ENCODE measurements at regions of chr11 and their contacts with region 1.

Region 1: DNA sequence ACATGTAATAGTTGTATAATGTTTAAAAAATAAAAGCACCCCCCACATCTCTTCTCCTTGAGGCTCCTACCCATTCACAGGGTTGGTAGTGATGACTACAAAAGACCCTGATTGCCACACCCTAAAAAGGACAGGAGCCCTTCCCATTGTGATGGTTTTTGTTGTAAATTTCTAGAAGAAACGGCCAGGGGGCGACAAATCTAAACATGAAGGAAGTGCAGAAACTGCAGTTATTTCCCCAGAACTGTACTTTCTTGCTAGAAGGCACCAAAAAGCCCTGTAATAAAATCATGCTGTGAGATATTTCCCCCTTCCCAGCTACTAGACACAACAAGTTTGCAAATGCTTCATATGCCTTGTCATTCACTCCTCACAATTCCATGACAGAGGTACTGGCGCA is 10.8 kb downstream of the PRR5L start:
- DNase-seq: no peak
- H3K4me3 Mint-ChIP-seq: no peak overlapping the region
- H3K27ac Mint-ChIP-seq: no peak overlapping the region
- H3K4me1 Mint-ChIP-seq: peaks cover 6% of the 10 kb centered on the region
- H3K27me3 Mint-ChIP-seq: peaks cover 19% of the 10 kb centered on the region

Region 2: GRCh38 chr11:36339888-36340287 is 33.0 kb after region 1 on chr11:
- intact Hi-C with region 1: loop called (anchors 5 kb)
- DNase-seq: no peak
- H3K4me3 Mint-ChIP-seq: no peak overlapping the region
- H3K27ac Mint-ChIP-seq: no peak overlapping the region
- H3K4me1 Mint-ChIP-seq: peaks cover 16% of the 10 kb centered on the region
- H3K27me3 Mint-ChIP-seq: peaks cover 44% of the 10 kb centered on the region

Region 3: GRCh38 chr11:36478700-36479329 is 171.9 kb after region 1 on chr11:
- intact Hi-C with region 1: loop called (anchors 1 kb)
- DNase-seq: no peak
- H3K4me3 Mint-ChIP-seq: no peak overlapping the region
- H3K27ac Mint-ChIP-seq: no peak overlapping the region
- H3K4me1 Mint-ChIP-seq: peaks cover 9% of the 10 kb centered on the region
- H3K27me3 Mint-ChIP-seq: peaks cover 4% of the 10 kb centered on the region

Region 4: DNA sequence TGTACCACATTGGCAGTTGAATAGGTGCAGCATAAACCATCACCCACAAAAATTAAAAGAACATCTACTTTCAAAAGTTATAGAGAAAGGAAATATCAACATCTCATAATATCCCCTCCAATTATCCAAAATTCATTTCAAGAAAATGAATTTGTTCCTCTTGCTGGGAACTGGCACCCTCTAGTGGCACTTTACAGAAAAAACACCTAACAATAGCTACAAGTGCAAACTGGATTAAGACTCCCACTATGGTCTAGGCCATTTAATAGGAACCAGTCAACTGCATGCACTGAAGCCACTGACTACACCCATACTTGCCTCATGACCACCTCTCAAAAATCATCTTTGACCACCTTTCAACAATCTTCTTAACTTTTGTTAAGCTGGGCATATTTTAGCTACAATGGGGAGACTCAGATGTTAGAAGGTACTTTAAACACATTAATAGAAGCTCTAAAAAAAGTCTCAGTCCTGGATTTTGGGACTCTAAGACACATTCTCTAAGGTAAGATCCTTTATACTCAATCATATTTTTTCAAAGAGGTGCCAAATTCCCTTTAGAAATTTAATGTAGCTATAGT is 185.9 kb after region 1 on chr11:
- intact Hi-C with region 1: loop called (anchors 1 kb)
- DNase-seq: no peak
- H3K4me3 Mint-ChIP-seq: no peak overlapping the region
- H3K27ac Mint-ChIP-seq: no peak overlapping the region
- H3K4me1 Mint-ChIP-seq: peaks cover 16% of the 10 kb centered on the region
- H3K27me3 Mint-ChIP-seq: no peaks in the 10 kb centered on the region